Mammary epithelial cell (primary cell): ENCODE measurements at regions of chr3 and their contacts with region 1.

Region 1: GRCh38 chr3:98022978-98023820 is 11.9 kb downstream of the GABRR3 start:
- DNase-seq: peak; percentile 46
- H3K4me3 ChIP-seq: no peak overlapping the region
- H3K27ac ChIP-seq: no peak overlapping the region
- H3K4me1 ChIP-seq: no peaks in the 10 kb centered on the region
- H3K27me3 ChIP-seq: no peaks in the 10 kb centered on the region
- CTCF ChIP-seq: peak; percentile 88 to 96

Region 2: DNA sequence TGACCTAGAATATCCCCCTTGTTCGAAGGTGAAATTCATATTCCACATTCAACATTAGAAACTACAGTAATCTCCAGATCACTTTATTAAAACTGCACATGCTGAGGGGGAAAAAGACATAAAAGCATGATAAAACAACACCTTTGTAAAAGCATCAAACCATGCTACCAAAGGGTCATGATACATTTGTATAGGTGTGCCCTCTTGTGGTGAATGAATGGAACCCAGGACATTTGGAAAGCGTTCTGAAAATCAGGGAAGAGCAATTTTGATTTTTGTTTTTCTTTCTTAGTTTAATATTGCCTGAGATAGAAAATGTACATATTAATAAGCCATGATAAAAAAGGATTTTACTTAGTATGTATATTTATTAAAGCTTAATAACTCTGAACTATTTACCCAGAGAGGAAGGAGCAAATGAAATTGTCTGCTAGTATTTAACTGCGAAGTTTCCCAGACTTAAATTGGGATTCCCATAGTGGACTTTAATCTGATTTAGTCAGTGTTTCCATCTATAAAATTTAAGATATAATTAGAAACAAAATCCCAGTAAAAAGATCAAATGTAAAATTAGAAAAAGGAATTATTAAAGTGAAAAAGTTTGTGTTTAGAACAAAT is 364.4 kb before region 1 on chr3:
- CTCF ChIA-PET with region 1: interaction called, 6 read pairs
- dilution Hi-C with region 1: no loop called
- in situ Hi-C with region 1: no loop called
- intact Hi-C with region 1: loop called (anchors 10 kb)
- DNase-seq: peak; percentile 9
- H3K4me3 ChIP-seq: no peak overlapping the region
- H3K27ac ChIP-seq: no peak overlapping the region
- H3K4me1 ChIP-seq: no peaks in the 10 kb centered on the region
- H3K27me3 ChIP-seq: no peaks in the 10 kb centered on the region
- CTCF ChIP-seq: peak; percentile 66 to 78

Region 3: GRCh38 chr3:97793420-97794019 is 229.7 kb before region 1 on chr3:
- CTCF ChIA-PET with region 1: interaction called, 4 read pairs
- dilution Hi-C with region 1: loop called (anchors 25 kb)
- in situ Hi-C with region 1: loop called (anchors 5 kb)
- intact Hi-C with region 1: loop called (anchors 1 kb)
- DNase-seq: peak; percentile 42
- H3K4me3 ChIP-seq: no peak overlapping the region
- H3K27ac ChIP-seq: no peak overlapping the region
- H3K4me1 ChIP-seq: no peaks in the 10 kb centered on the region
- H3K27me3 ChIP-seq: no peaks in the 10 kb centered on the region
- CTCF ChIP-seq: peak; percentile 66 to 76

Region 4: GRCh38 chr3:97871801-97872524 is 151.2 kb before region 1 on chr3:
- CTCF ChIA-PET with region 1: interaction called, 4 read pairs
- dilution Hi-C with region 1: no loop called
- in situ Hi-C with region 1: no loop called
- intact Hi-C with region 1: loop called (anchors 10 kb)
- DNase-seq: peak; percentile 96
- H3K4me3 ChIP-seq: peak overlapping the region in 1 of 3 experiments; percentile 16
- H3K27ac ChIP-seq: peak overlapping the region; percentile 87
- H3K4me1 ChIP-seq: peaks cover 25% of the 10 kb centered on the region
- H3K27me3 ChIP-seq: no peaks in the 10 kb centered on the region
- CTCF ChIP-seq: no peak

Region 5: DNA sequence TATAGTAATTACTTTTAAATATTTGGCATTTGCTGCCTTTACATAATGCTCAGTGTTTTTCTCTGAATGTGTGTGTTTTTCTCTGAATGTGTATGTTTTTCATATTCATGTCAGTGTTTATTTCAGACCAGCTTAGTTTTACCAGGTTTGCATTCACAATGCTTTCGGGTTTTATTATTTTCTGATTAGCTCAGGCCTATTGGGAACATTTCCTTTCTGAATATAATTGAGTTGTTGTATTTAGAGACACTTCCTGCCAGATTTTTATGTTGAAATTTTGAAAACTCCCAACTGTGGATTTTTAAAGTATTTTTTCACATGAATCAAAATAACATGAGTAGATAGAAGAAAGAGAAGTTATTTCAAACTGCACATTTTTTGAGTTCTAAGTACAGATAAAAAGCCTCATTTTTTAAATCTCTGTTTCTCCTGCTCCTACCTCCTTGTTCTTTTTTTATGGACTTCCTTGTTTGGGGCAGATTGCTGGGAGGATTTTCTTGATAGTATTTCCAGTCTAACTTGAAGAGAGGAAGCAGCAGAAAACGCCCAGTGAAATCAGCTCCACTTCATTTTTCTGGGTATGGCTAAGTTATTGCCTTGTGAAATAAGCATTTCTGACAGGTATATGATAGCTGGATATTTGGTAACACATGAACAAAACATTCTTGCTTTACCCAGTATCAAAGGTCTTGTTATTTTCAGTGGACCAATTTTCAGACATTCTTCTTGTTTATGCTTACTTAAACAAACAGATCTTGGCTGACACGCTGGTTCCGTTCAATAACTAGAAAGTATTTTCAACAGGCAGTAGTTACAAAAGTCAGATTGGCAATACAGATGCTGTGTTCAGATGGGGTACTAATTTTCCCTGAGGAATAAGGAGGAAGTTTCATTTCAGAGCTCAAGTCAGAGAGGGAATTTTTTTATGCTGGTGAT is 121.6 kb before region 1 on chr3:
- CTCF ChIA-PET with region 1: no interaction called
- dilution Hi-C with region 1: no loop called
- in situ Hi-C with region 1: no loop called
- intact Hi-C with region 1: no loop called
- DNase-seq: no peak
- H3K4me3 ChIP-seq: no peak overlapping the region
- H3K27ac ChIP-seq: no peak overlapping the region
- H3K4me1 ChIP-seq: no peaks in the 10 kb centered on the region
- H3K27me3 ChIP-seq: no peaks in the 10 kb centered on the region
- CTCF ChIP-seq: no peak

Region 6: GRCh38 chr3:97981886-97982285 is 41.3 kb before region 1 on chr3:
- CTCF ChIA-PET with region 1: no interaction called
- dilution Hi-C with region 1: no loop called
- in situ Hi-C with region 1: no loop called
- intact Hi-C with region 1: no loop called
- DNase-seq: no peak
- H3K4me3 ChIP-seq: no peak overlapping the region
- H3K27ac ChIP-seq: no peak overlapping the region
- H3K4me1 ChIP-seq: no peaks in the 10 kb centered on the region
- H3K27me3 ChIP-seq: no peaks in the 10 kb centered on the region
- CTCF ChIP-seq: no peak